Heart right ventricle (tissue), 16 donors: ENCODE measurements at regions of chr3 and their contacts with region 1.

Region 1: DNA sequence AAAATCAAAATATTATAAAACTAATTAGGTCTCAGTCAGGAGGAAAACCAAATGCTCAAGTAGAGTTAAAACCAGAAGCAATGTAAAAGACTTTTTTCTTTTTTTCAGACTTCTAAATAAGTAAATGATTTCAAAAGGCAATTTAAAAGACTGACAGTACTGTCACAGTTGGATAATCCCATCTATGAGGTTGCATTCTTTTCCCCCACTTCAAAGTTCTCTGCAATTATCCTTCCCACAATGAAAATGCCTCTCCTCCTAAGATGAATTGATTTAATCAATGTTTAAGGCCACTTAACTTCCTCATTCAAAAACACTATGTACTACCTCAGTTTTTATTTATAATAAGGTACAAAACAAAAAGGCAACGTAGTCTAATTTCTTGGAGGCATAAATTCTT is 8.1 kb downstream of the MRPL3 start:
- DNase-seq: no peak
- ATAC-seq: no peak
- H3K4me3 ChIP-seq: no peak overlapping the region
- H3K27ac ChIP-seq: no peak overlapping the region
- H3K4me1 ChIP-seq: no peaks in the 10 kb centered on the region
- H3K27me3 ChIP-seq: no peaks in the 10 kb centered on the region
- CTCF ChIP-seq: no peak

Region 2: DNA sequence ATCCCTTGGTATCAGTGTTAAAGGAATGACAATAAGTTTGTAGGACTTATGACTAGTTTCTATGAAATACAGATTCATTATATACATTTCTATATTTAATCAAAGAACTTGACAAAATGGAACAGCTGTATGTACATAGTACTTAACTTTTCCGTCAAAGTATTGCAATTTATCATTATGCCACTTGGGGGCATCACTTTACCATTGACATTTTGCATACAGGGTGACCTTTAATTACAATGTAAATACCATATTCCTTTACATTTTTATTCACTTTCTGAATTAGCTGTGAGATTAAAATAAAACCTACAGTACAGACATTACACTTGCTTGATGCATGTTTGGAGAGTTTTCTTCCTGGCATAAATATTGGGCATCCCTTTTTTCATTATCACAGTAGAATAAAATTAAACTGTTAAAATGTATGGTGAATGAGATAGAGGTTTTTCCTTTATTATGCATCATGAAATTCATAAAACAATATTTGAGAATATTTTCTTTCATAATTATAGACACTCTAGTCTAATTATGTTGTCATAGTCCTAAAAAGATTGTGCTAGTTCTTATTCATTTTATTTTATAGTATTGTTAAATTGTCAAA is 461.1 kb before region 1 on chr3:
- intact Hi-C with region 1: loop called in 1 of 10 experiments (anchors 10 kb)
- DNase-seq: no peak
- ATAC-seq: no peak
- H3K4me3 ChIP-seq: no peak overlapping the region
- H3K27ac ChIP-seq: no peak overlapping the region
- H3K4me1 ChIP-seq: no peaks in the 10 kb centered on the region
- H3K27me3 ChIP-seq: no peaks in the 10 kb centered on the region
- CTCF ChIP-seq: peak in 8 of 9 donors; percentile 57 to 80 (median 68)

Region 3: GRCh38 chr3:131193641-131194238 is 301.0 kb before region 1 on chr3:
- intact Hi-C with region 1: no loop called
- DNase-seq: no peak
- ATAC-seq: no peak
- H3K4me3 ChIP-seq: no peak overlapping the region
- H3K27ac ChIP-seq: no peak overlapping the region
- H3K4me1 ChIP-seq: no peaks in the 10 kb centered on the region
- H3K27me3 ChIP-seq: no peaks in the 10 kb centered on the region
- CTCF ChIP-seq: peak in 1 of 9 donors; percentile 14

Region 4: DNA sequence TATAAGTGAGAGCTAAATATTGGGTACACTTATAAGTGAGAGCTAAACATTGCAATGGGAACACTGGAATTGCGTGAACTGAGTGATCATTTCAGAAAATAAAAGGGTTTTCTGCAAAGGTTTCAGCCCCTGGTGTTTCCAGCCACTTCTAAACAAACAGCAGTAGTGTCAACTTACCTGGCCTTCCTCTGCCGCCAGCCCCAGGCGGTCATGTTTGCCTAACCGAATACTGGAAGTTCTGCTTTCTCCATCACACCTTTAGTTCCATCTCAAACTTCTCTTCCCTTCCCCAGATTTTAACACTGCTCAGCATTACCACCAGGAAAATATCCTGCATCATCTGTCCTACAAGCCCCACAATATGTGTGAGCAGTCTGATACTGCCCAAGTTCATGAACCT is 50.5 kb before region 1 on chr3:
- intact Hi-C with region 1: no loop called
- DNase-seq: no peak
- ATAC-seq: no peak
- H3K4me3 ChIP-seq: no peak overlapping the region
- H3K27ac ChIP-seq: no peak overlapping the region
- H3K4me1 ChIP-seq: peaks cover 0 to 8% (median 0%) of the 10 kb centered on the region in 9 donors
- H3K27me3 ChIP-seq: no peaks in the 10 kb centered on the region
- CTCF ChIP-seq: no peak

Region 5: DNA sequence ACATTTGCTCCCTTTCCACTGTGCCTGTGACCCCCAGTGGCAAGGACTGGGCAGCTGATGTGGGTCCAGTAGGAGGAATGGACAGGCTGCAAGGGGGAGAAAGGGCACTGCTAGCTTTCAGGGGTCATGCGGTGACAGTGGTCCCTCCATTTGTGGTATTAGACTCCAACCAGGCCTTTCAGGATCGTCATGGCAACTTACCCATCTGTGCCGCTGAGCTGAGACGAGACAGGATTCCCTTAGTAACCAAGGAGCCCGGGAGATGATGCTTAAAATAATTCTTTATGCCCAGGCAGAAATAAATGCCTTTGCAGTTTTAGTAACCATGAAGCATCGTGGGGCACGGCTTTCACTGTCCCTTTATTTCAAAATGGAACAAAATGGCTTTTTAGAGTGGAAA is 24.0 kb after region 1 on chr3:
- intact Hi-C with region 1: no loop called
- DNase-seq: no peak
- ATAC-seq: no peak
- H3K4me3 ChIP-seq: no peak overlapping the region
- H3K27ac ChIP-seq: no peak overlapping the region
- H3K4me1 ChIP-seq: no peaks in the 10 kb centered on the region
- H3K27me3 ChIP-seq: peaks cover 0 to 2% (median 0%) of the 10 kb centered on the region in 7 donors
- CTCF ChIP-seq: no peak